Body of pancreas (tissue), 4 donors: ENCODE measurements at regions of chr5 and their contacts with region 1.

Region 1: DNA sequence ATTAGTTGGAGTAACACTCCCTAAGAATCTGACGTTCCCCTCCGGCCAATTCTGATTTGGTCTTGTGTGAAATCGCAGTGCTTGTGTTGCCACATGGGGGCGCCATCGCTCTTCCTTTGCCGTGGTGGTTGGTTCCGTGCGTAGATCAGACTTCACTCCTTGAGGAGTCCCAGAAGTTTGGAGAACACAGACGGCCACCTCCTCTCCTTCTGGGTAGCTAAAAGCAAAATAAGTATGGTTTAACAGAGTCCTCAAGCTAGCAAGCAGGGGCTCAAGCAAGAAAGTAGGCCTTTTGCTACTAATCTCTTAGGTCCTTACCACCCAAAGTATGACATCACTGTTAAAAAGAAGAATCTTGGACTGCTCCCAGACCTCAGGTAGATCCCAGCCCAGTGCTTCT is 59.5 kb downstream of the HSPA4 start:
- DNase-seq: peak; percentile 83 to 87 (median 86)
- ATAC-seq: peak; percentile 80
- H3K4me3 ChIP-seq: no peak overlapping the region
- H3K27ac ChIP-seq: no peak overlapping the region
- H3K4me1 ChIP-seq: peaks cover 8% of the 10 kb centered on the region
- H3K27me3 ChIP-seq: no peaks in the 10 kb centered on the region
- CTCF ChIP-seq: peak; percentile 77 to 95 (median 92)
- POLR2A ChIP-seq: no peak

Region 2: GRCh38 chr5:132951897-132952296 is 159.4 kb before region 1 on chr5:
- intact Hi-C with region 1: no loop called
- DNase-seq: no peak
- ATAC-seq: no peak
- H3K4me3 ChIP-seq: no peak overlapping the region
- H3K27ac ChIP-seq: no peak overlapping the region
- H3K4me1 ChIP-seq: peaks cover 29% of the 10 kb centered on the region
- H3K27me3 ChIP-seq: no peaks in the 10 kb centered on the region
- CTCF ChIP-seq: no peak
- POLR2A ChIP-seq: no peak

Region 3: DNA sequence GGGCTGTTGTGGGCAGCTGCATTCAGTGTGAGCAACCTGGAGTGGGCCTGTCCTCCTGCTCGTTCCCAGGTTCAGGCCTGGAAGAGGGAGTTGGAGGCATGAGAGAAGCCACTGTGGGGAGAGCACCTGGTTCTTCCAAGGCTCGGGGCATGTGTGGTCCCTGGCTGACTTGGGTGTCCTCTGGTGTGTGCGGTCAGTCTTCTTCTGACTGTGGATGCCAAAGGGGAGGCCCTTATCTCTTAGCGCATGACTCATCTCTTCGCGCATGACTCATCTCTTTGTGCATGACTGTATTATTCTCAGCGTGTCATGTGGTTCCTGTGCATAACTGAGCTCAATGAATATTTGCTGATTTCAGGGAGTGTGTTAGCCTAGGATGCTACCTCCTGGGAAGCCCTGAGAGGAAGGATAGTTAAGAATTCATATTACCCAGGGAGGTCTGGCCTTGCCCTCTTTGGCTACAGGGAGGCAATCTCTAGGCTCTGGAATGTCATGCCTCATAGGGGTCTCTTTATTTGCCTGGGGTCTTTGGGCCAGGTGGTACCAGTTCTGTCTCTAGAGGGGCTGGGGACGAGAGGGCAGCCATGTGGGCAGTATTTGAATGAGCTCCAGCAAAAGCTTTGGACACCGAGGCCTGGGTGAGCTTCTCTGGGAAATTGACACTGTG is 129.3 kb after region 1 on chr5:
- intact Hi-C with region 1: loop called (anchors 10 kb)
- DNase-seq: peak in 1 of 4 donors; percentile 50
- ATAC-seq: no peak
- H3K4me3 ChIP-seq: no peak overlapping the region
- H3K27ac ChIP-seq: no peak overlapping the region
- H3K4me1 ChIP-seq: no peaks in the 10 kb centered on the region
- H3K27me3 ChIP-seq: no peaks in the 10 kb centered on the region
- CTCF ChIP-seq: no peak
- POLR2A ChIP-seq: no peak

Region 4: GRCh38 chr5:133292300-133292699 is 181.0 kb after region 1 on chr5:
- intact Hi-C with region 1: loop called (anchors 10 kb)
- DNase-seq: no peak
- ATAC-seq: no peak
- H3K4me3 ChIP-seq: no peak overlapping the region
- H3K27ac ChIP-seq: no peak overlapping the region
- H3K4me1 ChIP-seq: no peaks in the 10 kb centered on the region
- H3K27me3 ChIP-seq: no peaks in the 10 kb centered on the region
- CTCF ChIP-seq: no peak
- POLR2A ChIP-seq: no peak

Region 5: GRCh38 chr5:133373121-133373870 is 262.0 kb after region 1 on chr5:
- intact Hi-C with region 1: no loop called
- DNase-seq: no peak
- ATAC-seq: no peak
- H3K4me3 ChIP-seq: no peak overlapping the region
- H3K27ac ChIP-seq: no peak overlapping the region
- H3K4me1 ChIP-seq: no peaks in the 10 kb centered on the region
- H3K27me3 ChIP-seq: no peaks in the 10 kb centered on the region
- CTCF ChIP-seq: no peak
- POLR2A ChIP-seq: no peak

Region 6: DNA sequence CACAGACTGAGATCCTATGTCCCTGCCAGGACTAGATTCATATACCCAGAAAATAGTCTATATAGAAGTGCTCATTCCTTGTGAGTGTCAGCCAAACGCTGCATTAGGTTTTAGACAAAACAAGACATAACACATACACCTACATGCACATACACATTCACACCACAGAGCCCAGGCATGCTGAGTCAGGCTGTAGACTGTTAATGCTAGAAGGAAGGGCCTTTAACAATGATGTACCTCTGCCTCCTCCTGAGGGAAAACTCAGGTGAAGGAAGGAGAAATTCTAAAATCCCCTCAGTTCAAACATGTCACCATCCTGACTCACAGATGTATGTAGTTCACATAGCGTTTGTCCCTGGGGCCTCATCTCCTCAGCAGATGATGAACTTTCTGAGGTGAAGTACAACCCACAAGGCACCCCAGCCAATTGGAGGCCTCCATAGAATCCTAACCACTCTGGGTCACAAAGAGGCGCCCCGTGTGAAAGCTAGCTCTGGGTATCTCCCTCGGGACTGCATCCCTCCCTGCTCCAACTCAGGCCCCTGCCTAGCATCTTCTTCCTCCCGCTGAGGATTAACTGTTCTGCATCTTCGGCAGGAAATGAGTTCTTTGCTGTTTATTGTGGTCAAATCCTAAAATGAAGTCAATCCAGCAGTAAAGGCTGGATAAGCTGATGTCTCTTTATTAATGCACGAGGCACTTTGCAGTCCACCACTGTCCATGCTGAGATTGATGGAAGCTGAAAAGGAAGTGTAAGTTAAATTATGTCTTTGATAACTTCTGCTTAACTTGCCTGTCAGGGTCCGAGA is 541.9 kb after region 1 on chr5:
- intact Hi-C with region 1: no loop called
- DNase-seq: no peak
- ATAC-seq: no peak
- H3K4me3 ChIP-seq: no peak overlapping the region
- H3K27ac ChIP-seq: no peak overlapping the region
- H3K4me1 ChIP-seq: no peaks in the 10 kb centered on the region
- H3K27me3 ChIP-seq: no peaks in the 10 kb centered on the region
- CTCF ChIP-seq: no peak
- POLR2A ChIP-seq: no peak

Region 7: DNA sequence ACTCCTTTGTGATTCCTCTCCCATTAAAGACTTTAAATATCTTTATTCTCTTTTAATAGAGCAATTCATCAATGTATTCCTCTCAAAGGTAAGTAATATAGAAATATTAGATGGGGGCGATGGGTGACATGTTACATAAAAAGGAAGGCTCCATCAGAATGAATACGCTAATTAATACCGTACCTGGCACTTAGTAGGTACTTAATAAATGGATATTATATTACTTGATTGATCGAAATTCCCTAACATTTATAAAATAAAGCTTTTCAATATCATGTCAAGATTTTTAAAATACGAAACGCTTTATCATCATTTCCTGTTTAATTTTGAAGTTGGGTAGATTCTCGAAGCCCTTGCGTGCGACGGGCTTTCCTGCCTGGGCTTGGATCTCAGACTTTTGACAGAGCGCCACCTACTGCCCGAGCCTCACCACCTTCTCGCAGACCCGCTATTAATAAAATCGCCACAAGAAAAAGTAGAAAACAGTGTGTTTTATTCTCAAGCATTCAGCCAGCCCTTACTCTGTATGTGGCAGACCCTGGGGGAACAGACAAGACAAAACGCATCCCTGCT is 757.7 kb after region 1 on chr5:
- intact Hi-C with region 1: loop called (anchors 10 kb)
- DNase-seq: peak; percentile 81 to 83 (median 81)
- ATAC-seq: peak; percentile 79
- H3K4me3 ChIP-seq: no peak overlapping the region
- H3K27ac ChIP-seq: no peak overlapping the region
- H3K4me1 ChIP-seq: no peaks in the 10 kb centered on the region
- H3K27me3 ChIP-seq: no peaks in the 10 kb centered on the region
- CTCF ChIP-seq: peak; percentile 72 to 88 (median 82)
- POLR2A ChIP-seq: no peak